ENCODE measurements at regions of chr1 and their contacts with region 1.

Region 1: DNA sequence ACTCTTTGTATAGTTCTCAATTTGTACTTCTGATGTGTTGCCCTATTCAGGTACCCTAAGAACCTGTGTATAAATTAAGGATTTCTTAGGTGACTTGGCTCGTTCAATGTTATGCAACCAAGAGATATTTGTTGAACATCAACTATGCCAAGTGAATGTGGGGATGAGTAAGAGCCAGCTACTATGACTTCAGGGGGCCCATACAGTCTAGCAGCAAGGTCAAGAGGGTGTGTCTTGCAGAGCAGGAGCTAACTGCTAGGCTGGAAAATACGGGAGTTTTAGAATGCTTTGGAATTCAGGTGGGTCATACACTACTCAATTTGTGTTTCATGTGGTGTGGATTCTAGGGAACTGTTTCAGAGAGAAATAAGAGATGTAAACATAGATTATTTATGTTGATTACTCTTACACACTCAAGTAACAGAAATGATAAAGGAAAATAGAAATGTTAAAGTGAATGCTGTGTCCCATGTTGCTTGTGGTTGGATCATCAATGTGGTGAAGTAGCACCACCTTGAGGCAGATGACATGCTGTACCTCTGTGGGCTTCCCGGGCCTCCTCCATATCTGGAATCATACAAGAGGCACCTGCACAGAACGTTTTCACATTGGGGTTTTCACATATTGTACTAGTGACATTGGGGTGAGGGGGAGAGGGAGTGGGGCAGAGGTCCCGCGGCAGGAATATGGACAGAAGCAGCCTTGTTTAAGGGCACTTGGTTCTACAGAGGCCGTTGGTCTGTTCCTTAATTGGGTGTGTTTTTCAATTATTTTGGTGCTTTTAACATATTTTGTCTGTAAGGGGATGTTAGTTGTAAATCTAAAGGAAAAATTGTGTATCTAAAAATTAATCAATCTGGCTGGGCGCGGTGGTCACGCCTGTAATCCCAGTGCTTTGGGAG is 12.4 kb downstream of the ARPC5 start:
- DNase-seq: peak; percentile 38
- H3K4me3 Mint-ChIP-seq: no peak overlapping the region
- H3K27ac Mint-ChIP-seq: no peak overlapping the region
- H3K4me1 Mint-ChIP-seq: peaks cover 29% of the 10 kb centered on the region
- H3K27me3 Mint-ChIP-seq: no peaks in the 10 kb centered on the region

Region 2: DNA sequence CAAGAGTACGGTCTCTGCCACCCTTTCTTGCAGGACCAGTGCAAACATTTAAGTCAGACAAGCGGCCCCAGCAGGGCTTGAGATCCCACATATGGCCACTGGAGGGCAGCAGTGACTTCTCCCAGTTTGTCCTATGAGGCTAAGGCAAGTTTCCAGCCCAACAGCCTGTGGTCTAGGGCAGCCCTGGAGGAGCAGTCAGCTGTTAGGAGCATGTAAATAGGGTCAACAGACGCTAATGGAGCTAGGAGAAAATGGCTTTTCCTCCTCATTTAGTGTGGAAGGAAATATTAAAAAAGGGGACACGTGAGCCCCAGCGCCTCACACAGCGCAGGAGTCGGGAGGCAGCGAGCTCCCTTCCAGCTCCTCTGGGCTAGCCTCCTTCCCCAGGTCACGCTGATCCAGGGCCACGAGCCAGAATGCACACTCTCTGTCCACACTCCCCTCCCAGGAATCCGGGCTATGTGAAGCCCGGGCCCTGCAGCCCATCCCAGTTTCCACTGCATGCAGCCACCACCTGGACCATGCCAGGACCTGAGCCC is 341.5 kb before region 1 on chr1:
- intact Hi-C with region 1: loop called (anchors 1 kb)
- DNase-seq: peak; percentile 50
- H3K4me3 Mint-ChIP-seq: no peak overlapping the region
- H3K27ac Mint-ChIP-seq: no peak overlapping the region
- H3K4me1 Mint-ChIP-seq: peaks cover 6% of the 10 kb centered on the region
- H3K27me3 Mint-ChIP-seq: peaks cover 5% of the 10 kb centered on the region

Region 3: GRCh38 chr1:183543619-183544204 is 79.4 kb before region 1 on chr1:
- intact Hi-C with region 1: loop called (anchors 2 kb)
- DNase-seq: no peak
- H3K4me3 Mint-ChIP-seq: no peak overlapping the region
- H3K27ac Mint-ChIP-seq: no peak overlapping the region
- H3K4me1 Mint-ChIP-seq: peaks cover 22% of the 10 kb centered on the region
- H3K27me3 Mint-ChIP-seq: no peaks in the 10 kb centered on the region

Region 4: GRCh38 chr1:183567584-183567983 is 55.6 kb before region 1 on chr1:
- intact Hi-C with region 1: loop called (anchors 5 kb)
- DNase-seq: no peak
- H3K4me3 Mint-ChIP-seq: no peak overlapping the region
- H3K27ac Mint-ChIP-seq: peak overlapping the region; percentile 66
- H3K4me1 Mint-ChIP-seq: peaks cover 23% of the 10 kb centered on the region
- H3K27me3 Mint-ChIP-seq: no peaks in the 10 kb centered on the region

Region 5: GRCh38 chr1:183685112-183685713 is 62.1 kb after region 1 on chr1:
- intact Hi-C with region 1: loop called (anchors 1 kb)
- DNase-seq: peak; percentile 11
- H3K4me3 Mint-ChIP-seq: no peak overlapping the region
- H3K27ac Mint-ChIP-seq: no peak overlapping the region
- H3K4me1 Mint-ChIP-seq: peaks cover 9% of the 10 kb centered on the region
- H3K27me3 Mint-ChIP-seq: peaks cover 19% of the 10 kb centered on the region